Calu3 (cell line): ENCODE measurements at regions of chr12 and their contacts with region 1.

Region 1: DNA sequence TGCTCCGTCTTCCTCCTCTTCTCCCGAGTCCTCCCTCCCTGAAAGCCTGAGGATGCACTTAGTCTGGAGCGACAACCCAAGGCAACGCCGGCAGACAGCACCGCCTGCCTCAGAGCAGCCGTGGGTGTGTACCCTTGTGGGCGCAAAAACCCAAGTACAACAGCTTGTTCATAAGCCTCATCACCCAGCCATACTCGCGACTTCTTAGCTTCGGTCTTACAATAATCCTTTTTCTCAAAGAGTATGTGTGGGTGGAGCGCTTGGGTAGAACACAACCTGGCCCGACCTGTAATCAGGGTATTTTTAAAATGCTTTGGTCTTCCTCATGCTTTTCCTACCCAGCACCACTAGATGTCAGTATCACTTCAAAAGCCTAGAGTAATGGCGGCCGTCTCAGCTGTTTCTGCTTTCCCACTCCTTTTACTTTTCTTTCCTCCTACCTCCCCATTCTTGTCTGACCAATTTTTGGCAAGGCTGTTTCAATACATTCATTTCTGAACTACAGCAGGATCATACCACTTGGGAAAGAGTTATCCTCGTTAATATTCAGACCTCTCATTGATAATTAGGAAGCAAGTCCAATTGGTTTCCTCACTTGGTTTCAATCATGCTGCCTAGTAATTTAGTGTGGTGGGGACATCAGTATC is 198.9 kb downstream of the EPS8 start:
- DNase-seq: peak; percentile 49
- H3K4me3 Mint-ChIP-seq: peak overlapping the region; percentile 80
- H3K27ac Mint-ChIP-seq: peak overlapping the region; percentile 83
- H3K4me1 Mint-ChIP-seq: peaks cover 21% of the 10 kb centered on the region
- H3K27me3 Mint-ChIP-seq: no peaks in the 10 kb centered on the region
- CTCF ChIP-seq: peak; percentile 78

Region 2: DNA sequence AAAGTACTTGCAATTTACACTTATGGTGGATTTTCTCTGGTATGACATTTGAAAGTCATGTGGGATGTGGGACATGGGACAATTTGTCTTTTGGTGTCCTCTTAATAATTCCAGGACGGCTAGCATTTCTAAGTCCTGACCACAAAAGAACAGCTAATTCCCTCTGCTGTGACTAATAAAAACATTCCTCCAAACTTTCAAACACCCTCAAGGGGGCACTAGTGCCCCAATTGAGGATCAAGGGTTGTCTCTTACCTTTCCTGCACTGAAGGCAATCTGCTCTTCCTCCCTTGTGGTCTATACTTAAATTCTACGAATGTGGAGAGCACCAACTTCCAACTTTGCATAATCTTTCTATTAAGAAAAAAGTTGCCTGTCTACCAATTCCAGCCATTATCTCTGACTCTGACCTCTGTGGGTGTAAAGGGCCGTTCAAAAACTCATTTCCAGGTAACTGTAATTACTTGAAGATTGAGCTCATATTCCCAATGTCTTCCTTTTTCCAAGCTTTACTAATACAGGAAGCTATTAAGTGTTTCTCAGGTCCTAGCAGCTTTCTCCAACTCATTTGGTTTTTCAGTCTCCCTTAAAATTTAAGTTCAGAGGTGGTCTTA is 57.8 kb before region 1 on chr12:
- CTCF ChIA-PET with region 1: interaction called, 55 read pairs
- intact Hi-C with region 1: no loop called
- DNase-seq: peak; percentile 74
- H3K4me3 Mint-ChIP-seq: no peak overlapping the region
- H3K27ac Mint-ChIP-seq: no peak overlapping the region
- H3K4me1 Mint-ChIP-seq: peaks cover 14% of the 10 kb centered on the region
- H3K27me3 Mint-ChIP-seq: no peaks in the 10 kb centered on the region
- CTCF ChIP-seq: peak; percentile 63

Region 3: DNA sequence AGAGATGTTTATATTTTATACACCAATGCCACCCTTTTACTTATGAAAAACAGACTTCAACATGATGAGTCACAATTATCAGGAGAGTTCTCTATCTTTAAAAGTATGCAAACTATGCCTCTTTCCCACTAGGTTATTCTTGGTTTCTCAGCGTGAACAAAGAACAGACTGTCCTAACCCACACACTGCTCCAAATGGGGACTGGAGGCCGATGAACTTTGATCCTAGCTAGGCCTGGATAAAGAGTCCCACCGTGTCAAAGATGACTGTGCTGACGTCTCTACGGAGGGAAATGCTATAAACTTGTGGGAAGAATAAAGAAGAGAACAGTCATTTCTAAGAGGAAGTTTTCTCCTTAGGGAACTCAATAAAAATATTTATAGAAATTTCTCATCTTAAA is 38.8 kb after region 1 on chr12:
- CTCF ChIA-PET with region 1: no interaction called
- intact Hi-C with region 1: loop called (anchors 2 kb)
- DNase-seq: peak; percentile 75
- H3K4me3 Mint-ChIP-seq: no peak overlapping the region
- H3K27ac Mint-ChIP-seq: peak overlapping the region; percentile 91
- H3K4me1 Mint-ChIP-seq: peaks cover 80% of the 10 kb centered on the region
- H3K27me3 Mint-ChIP-seq: no peaks in the 10 kb centered on the region
- CTCF ChIP-seq: no peak

Region 4: DNA sequence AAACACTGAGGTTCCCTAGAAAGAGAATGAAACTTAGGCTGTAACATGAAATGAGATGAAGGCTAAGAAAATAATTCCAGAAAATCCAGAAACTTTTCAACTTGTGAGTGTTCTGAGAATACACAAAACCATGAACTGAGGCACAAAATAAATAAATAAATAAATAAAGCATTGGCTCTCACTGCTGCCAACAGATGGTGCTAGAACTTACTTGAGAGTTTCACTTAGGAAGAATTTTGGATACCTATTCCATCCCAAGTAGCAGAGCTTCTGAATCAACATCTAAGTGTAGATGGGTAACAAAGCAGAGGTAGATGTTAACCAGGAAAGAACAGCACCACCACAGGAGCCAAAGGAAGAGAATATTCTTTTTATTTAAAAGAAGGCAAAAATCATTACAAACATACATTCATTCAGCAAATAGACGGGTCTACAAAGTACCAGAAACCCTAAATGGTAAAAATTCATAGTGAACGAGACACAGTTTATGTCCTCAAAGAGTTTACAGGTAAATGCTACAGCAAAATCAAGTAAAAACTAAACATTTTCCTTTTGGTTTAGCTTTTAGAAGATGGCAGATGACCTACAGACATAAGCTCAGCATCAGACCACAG is 182.2 kb after region 1 on chr12:
- CTCF ChIA-PET with region 1: no interaction called
- intact Hi-C with region 1: loop called (anchors 5 kb)
- DNase-seq: no peak
- H3K4me3 Mint-ChIP-seq: no peak overlapping the region
- H3K27ac Mint-ChIP-seq: peak overlapping the region; percentile 86
- H3K4me1 Mint-ChIP-seq: peaks cover 59% of the 10 kb centered on the region
- H3K27me3 Mint-ChIP-seq: no peaks in the 10 kb centered on the region
- CTCF ChIP-seq: peak; percentile 15

Region 5: DNA sequence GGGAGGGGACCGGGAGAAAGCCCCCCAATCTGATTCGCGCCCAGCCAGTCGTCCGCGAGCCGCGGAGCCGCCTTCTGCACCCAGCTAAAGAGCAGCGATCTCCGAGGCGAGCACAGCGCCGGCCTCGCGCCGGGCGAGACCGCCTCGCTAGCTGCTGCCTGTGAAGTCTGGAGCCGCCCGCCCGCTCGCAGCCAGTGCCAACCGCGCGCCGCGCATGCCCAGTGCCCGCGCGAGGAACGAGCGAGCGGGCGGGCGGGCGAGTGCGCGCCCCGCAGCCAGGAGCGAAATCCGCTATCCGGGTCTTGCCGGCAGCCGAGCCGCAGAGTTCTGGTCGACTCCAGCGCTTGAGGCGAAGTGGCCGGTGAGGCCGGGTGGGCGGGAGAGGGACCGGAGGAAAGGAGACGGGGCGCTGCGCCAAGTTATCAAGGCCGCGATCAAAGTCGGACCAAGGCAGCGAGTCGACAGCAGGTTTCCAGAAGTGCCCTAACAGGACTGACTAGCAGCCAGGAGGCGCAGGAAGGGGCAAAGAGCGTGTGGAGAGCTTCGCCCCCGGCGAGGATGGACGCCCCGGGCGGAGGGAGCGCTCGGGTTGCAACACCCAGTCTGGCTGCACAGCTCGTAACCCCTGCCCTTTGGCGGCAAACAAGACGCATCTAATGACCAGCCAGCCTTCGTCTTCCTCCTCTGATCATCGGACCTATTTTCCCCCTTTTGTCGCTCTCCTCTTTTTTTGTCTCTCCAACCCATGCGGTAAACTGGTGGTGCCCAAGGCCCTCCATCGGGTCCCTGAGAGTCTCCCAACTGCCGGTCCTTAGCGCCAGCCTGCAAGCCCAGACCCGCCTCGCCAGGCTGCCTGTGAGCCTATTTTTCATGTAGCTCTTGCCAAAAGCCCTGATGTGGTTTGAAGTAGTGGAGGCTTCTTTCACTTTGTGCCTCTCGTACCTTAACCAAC is 199.2 kb after region 1 on chr12 and contains the start of gene EPS8:
- CTCF ChIA-PET with region 1: no interaction called
- intact Hi-C with region 1: loop called (anchors 5 kb)
- DNase-seq: peak; percentile 95
- H3K4me3 Mint-ChIP-seq: peak within 1 kb of the TSS; percentile 80
- H3K27ac Mint-ChIP-seq: peak within 1 kb of the TSS; percentile 71
- H3K4me1 Mint-ChIP-seq: peaks cover 34% of the 10 kb centered on the region
- H3K27me3 Mint-ChIP-seq: no peaks in the 10 kb centered on the region
- CTCF ChIP-seq: no peak
- total RNA-seq, gene EPS8: 97.5 and 108 TPM in 2 replicates

Region 6: GRCh38 chr12:15856097-15856982 is 266.0 kb after region 1 on chr12:
- CTCF ChIA-PET with region 1: interaction called, 12 read pairs
- intact Hi-C with region 1: loop called (anchors 1 kb)
- DNase-seq: peak; percentile 70
- H3K4me3 Mint-ChIP-seq: no peak overlapping the region
- H3K27ac Mint-ChIP-seq: peak overlapping the region; percentile 43
- H3K4me1 Mint-ChIP-seq: peaks cover 38% of the 10 kb centered on the region
- H3K27me3 Mint-ChIP-seq: no peaks in the 10 kb centered on the region
- CTCF ChIP-seq: peak; percentile 69